ENCODE measurements at regions of chr20 and their contacts with region 1.

Region 1: DNA sequence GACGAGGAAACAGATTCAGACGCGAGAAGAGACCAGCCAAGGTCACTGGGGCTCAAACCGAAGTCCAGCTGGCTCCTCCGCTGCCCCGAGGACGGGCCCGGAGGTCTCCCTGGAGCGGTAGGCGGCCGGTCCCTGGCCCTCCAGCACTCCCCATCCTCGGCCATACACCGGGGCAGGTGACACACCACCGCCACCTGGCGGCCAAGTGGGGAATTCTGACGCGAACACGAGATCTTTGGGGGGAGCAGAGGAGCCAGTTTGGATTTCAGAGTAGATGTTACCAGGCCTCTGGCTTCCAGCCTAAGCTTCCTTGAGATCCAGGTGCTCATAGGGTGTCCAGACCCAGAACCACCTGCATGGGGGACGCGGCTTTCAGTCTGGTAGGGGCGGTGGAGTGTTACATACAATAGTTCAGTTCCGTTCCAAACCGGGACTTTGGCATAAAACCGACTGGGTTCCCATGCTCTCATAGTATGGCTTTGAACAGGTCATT is 16.1 kb downstream of the BPIFB1 start:
- DNase-seq: peak; percentile 34 to 61 (median 38)
- H3K4me3 ChIP-seq: no peak overlapping the region
- H3K4me3 Mint-ChIP-seq: no peak overlapping the region
- H3K27ac ChIP-seq: no peak overlapping the region
- H3K27ac Mint-ChIP-seq: no peak overlapping the region
- H3K4me1 ChIP-seq: peaks cover 0 to 3% of the 10 kb centered on the region in 2 donors
- H3K4me1 Mint-ChIP-seq: peaks cover 5% of the 10 kb centered on the region
- H3K27me3 ChIP-seq: no peaks in the 10 kb centered on the region
- H3K27me3 Mint-ChIP-seq: peaks cover 11 to 13% (median 12%) of the 10 kb centered on the region in 3 donors
- CTCF ChIP-seq: peak; percentile 97

Region 2: GRCh38 chr20:32789896-32790750 is 509.0 kb before region 1 on chr20:
- intact Hi-C with region 1: loop called in 1 of 2 experiments (anchors 10 kb)
- DNase-seq: peak; percentile 45 to 60 (median 54)
- H3K4me3 ChIP-seq: no peak overlapping the region
- H3K4me3 Mint-ChIP-seq: no peak overlapping the region
- H3K27ac ChIP-seq: no peak overlapping the region
- H3K27ac Mint-ChIP-seq: peak overlapping the region in 1 of 7 donors; percentile 66
- H3K4me1 ChIP-seq: no peaks in the 10 kb centered on the region
- H3K4me1 Mint-ChIP-seq: peaks cover 4% of the 10 kb centered on the region
- H3K27me3 ChIP-seq: no peaks in the 10 kb centered on the region
- H3K27me3 Mint-ChIP-seq: peaks cover 0 to 4% (median 2%) of the 10 kb centered on the region in 3 donors
- CTCF ChIP-seq: peak; percentile 100

Region 3: DNA sequence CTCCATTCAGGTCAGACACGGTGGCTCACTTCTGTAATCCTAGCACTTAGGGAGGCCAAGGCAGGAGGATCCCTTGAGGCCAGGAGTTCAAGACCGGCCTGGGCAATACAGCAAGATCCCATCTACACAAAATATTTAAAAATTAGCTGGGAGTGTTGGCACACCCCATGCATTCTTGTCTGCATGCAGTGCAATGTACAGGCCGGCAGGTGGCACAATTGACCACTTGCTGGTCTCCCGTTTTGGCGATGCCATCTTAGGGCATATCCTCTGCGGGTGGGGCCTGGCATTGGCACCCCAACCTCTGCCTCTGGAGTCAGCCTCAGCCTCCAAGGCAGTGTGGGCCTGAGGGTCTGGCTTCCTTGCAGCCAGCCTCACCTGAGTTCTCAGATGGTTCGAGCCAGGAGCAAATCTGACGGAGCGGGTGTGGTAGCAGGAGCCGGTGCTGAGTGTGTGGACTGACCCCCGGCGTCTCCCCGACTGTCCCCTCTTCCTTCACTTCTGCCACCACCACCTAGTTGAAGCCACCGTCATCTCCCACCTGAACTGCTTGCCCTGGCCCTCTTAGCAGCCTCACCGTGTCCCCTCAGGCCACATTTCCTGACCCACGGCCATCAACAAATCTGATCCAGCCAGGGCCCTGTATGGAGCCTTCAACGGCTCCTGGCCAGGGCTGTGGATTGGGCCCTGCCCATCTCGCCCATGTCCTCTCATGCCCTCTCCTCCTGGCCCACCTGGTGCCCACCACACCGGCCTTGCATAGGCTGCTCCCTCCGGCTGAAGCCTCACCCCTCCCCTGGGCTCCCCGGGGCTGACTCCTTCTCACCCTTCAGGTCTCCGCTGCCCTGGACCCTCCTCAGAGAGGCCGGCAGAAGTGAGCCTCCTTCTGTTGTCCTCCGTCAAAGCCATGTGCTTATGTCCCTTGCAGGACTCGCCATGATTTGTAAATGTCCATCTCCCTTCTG is 396.4 kb before region 1 on chr20:
- intact Hi-C with region 1: loop called (anchors 2 kb)
- DNase-seq: peak; percentile 25 to 52 (median 41)
- H3K4me3 ChIP-seq: no peak overlapping the region
- H3K4me3 Mint-ChIP-seq: no peak overlapping the region
- H3K27ac ChIP-seq: no peak overlapping the region
- H3K27ac Mint-ChIP-seq: peak overlapping the region in 1 of 7 donors; percentile 1
- H3K4me1 ChIP-seq: no peaks in the 10 kb centered on the region
- H3K4me1 Mint-ChIP-seq: peaks cover 4% of the 10 kb centered on the region
- H3K27me3 ChIP-seq: no peaks in the 10 kb centered on the region
- H3K27me3 Mint-ChIP-seq: peaks cover 0 to 2% (median 0%) of the 10 kb centered on the region in 3 donors
- CTCF ChIP-seq: peak; percentile 97

Region 4: DNA sequence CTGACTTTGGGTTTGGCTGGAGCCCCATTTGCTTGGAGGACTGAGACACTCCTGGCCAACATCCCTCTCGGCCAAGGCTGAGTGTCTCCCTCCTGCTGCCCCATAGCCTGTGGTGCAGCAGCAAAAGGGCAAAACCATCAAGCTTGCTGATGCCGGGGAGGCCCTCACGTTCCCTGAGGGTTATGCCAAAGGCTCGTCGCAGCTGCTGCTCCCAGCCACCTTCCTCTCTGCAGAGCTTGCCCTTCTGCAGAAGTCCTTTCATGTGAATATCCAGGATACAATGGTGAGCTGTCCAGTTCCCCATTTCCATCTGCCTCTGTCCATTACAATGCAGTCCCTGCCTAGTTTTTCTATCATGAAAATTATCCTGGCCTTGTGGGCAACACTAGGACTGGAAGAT is 261.7 kb before region 1 on chr20:
- intact Hi-C with region 1: no loop called
- DNase-seq: no peak
- H3K4me3 ChIP-seq: no peak overlapping the region
- H3K4me3 Mint-ChIP-seq: no peak overlapping the region
- H3K27ac ChIP-seq: no peak overlapping the region
- H3K27ac Mint-ChIP-seq: no peak overlapping the region
- H3K4me1 ChIP-seq: no peaks in the 10 kb centered on the region
- H3K4me1 Mint-ChIP-seq: no peaks in the 10 kb centered on the region
- H3K27me3 ChIP-seq: no peaks in the 10 kb centered on the region
- H3K27me3 Mint-ChIP-seq: peaks cover 0 to 8% (median 4%) of the 10 kb centered on the region in 3 donors
- CTCF ChIP-seq: no peak

Region 5: DNA sequence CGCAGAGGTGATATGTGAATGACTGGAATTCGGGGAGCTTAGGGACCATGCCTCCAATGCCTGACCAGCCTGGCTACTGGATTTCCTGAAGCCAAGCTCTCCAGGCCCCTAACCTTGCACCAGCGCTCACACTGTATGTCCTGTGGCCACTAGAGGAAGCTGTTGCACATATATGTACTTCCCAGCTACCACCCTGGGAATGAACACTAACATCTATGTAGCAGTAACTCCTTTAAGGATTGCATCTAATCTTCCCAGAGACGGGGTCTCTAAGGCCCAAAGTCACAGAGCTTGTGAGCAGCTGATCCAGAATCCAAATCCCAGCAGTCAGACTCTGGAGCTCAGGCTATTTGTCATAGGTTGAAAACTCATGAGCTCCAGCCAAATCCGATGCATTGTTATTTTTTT is 36.5 kb before region 1 on chr20:
- intact Hi-C with region 1: no loop called
- DNase-seq: peak; percentile 39 to 88 (median 52)
- H3K4me3 ChIP-seq: peak overlapping the region in 2 of 3 experiments; percentile 17 to 32
- H3K4me3 Mint-ChIP-seq: peak overlapping the region; percentile 45 to 80
- H3K27ac ChIP-seq: peak overlapping the region; percentile 66 to 74
- H3K27ac Mint-ChIP-seq: peak overlapping the region; percentile 83 to 97 (median 94)
- H3K4me1 ChIP-seq: peaks cover 49 to 57% of the 10 kb centered on the region in 2 donors
- H3K4me1 Mint-ChIP-seq: peaks cover 56% of the 10 kb centered on the region
- H3K27me3 ChIP-seq: no peaks in the 10 kb centered on the region
- H3K27me3 Mint-ChIP-seq: no peaks in the 10 kb centered on the region
- CTCF ChIP-seq: peak; percentile 76

Region 6: GRCh38 chr20:33332905-33333456 is 33.8 kb after region 1 on chr20:
- intact Hi-C with region 1: no loop called
- DNase-seq: no peak
- H3K4me3 ChIP-seq: no peak overlapping the region
- H3K4me3 Mint-ChIP-seq: no peak overlapping the region
- H3K27ac ChIP-seq: no peak overlapping the region
- H3K27ac Mint-ChIP-seq: peak overlapping the region in 1 of 7 donors; percentile 54
- H3K4me1 ChIP-seq: no peaks in the 10 kb centered on the region
- H3K4me1 Mint-ChIP-seq: no peaks in the 10 kb centered on the region
- H3K27me3 ChIP-seq: no peaks in the 10 kb centered on the region
- H3K27me3 Mint-ChIP-seq: peaks cover 3 to 16% (median 9%) of the 10 kb centered on the region in 3 donors
- CTCF ChIP-seq: no peak

Measured in CD14-positive monocyte (primary cell).